ENCODE measurements at regions of chr12 and their contacts with region 1.

Region 1: DNA sequence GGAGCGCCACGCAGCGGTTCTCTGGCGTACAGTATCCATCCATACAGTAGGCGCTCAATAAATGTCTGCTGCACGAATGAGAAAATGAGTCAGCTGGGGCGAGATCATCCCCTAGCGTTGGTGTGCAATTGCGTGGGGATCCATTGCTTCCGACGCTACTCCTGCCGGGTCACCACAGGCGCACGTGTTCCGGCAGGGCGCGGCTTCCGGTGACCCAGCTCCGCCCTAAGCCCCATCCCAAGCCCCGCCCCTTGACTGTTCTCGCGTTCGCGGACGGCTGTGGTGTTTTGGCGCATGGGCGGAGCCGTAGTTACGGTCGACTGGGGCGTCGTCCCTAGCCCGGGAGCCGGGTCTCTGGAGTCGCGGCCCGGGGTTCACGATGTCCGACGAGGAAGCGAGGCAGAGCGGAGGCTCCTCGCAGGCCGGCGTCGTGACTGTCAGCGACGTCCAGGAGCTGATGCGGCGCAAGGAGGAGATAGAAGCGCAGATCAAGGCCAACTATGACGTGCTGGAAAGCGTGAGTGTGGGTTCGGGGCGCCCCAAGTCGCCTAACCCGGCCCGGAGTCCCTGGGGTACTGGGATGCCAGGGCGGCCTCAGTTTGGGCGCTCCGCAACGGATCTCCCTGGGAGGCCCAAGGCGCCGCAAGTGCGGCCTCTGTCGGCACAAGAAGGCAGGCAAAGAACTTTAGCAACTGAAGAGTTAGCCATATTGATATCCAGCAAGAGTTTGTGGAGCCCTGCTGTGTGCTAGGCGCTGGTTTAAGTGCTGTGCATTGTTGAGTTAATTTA is at the start of gene PSMD9:
- DNase-seq: peak; percentile 99
- H3K4me3 Mint-ChIP-seq: peak within 1 kb of the TSS; percentile 98
- H3K27ac Mint-ChIP-seq: peak within 1 kb of the TSS; percentile 94
- H3K4me1 Mint-ChIP-seq: peaks cover 37% of the 10 kb centered on the region
- H3K27me3 Mint-ChIP-seq: no peaks in the 10 kb centered on the region
- total RNA-seq, gene PSMD9: 56.6 to 60.6 TPM

Region 2: GRCh38 chr12:121467115-121467793 is 421.4 kb before region 1 on chr12:
- CTCF ChIA-PET with region 1: no interaction called
- intact Hi-C with region 1: loop called (anchors 1 kb)
- DNase-seq: peak; percentile 87
- H3K4me3 Mint-ChIP-seq: peak overlapping the region; percentile 43
- H3K27ac Mint-ChIP-seq: no peak overlapping the region
- H3K4me1 Mint-ChIP-seq: peaks cover 19% of the 10 kb centered on the region
- H3K27me3 Mint-ChIP-seq: no peaks in the 10 kb centered on the region

Region 3: DNA sequence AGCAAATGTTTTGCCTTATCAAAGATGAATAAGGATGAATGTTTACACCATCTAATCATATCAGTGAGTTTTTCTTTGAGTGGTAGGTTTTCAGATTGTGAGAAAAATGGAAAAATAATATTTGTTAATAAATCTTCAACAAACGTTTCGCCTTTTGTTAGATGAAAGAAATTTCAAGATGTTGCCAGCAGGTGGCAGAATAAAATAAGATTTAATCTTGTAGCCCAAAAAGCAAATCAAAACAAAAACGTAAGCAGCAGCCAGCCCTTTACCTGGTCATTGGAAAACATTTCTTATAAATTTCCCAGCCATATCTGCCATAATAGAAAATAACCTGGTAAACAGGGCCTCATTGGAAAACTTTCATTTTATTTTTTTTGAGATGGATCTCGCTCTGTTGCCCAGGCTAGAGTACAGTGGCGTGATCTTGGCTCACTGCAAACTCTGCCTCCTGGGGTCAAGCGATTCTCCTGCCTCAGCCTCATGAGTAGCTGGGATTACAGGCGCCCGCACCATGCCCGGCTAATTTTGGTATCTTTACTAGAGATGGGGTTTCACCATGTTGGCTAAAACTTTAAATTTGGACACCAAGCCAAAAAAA is 191.5 kb before region 1 on chr12:
- CTCF ChIA-PET with region 1: interaction called, 4 read pairs
- intact Hi-C with region 1: loop called (anchors 1 kb)
- DNase-seq: peak; percentile 38
- H3K4me3 Mint-ChIP-seq: no peak overlapping the region
- H3K27ac Mint-ChIP-seq: no peak overlapping the region
- H3K4me1 Mint-ChIP-seq: peaks cover 2% of the 10 kb centered on the region
- H3K27me3 Mint-ChIP-seq: no peaks in the 10 kb centered on the region

Region 4: GRCh38 chr12:121802846-121803630 is 85.6 kb before region 1 on chr12:
- CTCF ChIA-PET with region 1: interaction called, 7 read pairs
- intact Hi-C with region 1: loop called (anchors 1 kb)
- DNase-seq: peak; percentile 95
- H3K4me3 Mint-ChIP-seq: peak overlapping the region; percentile 97
- H3K27ac Mint-ChIP-seq: peak overlapping the region; percentile 100
- H3K4me1 Mint-ChIP-seq: peaks cover 33% of the 10 kb centered on the region
- H3K27me3 Mint-ChIP-seq: no peaks in the 10 kb centered on the region

Region 5: GRCh38 chr12:121872546-121873215 is 16.0 kb before region 1 on chr12:
- CTCF ChIA-PET with region 1: interaction called, 16 read pairs
- intact Hi-C with region 1: no loop called
- DNase-seq: peak; percentile 10
- H3K4me3 Mint-ChIP-seq: no peak overlapping the region
- H3K27ac Mint-ChIP-seq: no peak overlapping the region
- H3K4me1 Mint-ChIP-seq: peaks cover 3% of the 10 kb centered on the region
- H3K27me3 Mint-ChIP-seq: no peaks in the 10 kb centered on the region

Region 6: DNA sequence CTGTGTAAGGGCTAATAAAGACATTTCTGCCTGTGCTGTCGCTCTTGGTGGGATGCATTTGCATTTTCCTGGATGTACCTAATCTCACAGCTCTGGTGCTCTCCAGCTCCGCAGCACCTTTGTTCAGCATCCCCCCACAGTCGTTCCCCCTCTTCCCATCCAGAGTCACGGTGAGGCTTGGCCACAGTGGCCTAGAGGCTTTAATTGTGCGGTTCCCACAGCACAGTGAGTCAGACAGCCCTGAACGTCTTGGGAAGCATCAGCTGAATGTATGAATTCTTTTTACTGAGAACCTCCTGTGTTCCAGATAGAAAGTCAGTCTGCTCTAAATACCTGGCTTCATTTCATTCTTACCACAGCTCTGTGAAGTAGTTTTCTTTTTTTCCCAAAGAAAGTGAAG is 218.6 kb after region 1 on chr12:
- CTCF ChIA-PET with region 1: no interaction called
- intact Hi-C with region 1: loop called (anchors 2 kb)
- DNase-seq: no peak
- H3K4me3 Mint-ChIP-seq: no peak overlapping the region
- H3K27ac Mint-ChIP-seq: peak overlapping the region; percentile 65
- H3K4me1 Mint-ChIP-seq: peaks cover 79% of the 10 kb centered on the region
- H3K27me3 Mint-ChIP-seq: no peaks in the 10 kb centered on the region